Activated CD4-positive, alpha-beta memory T cell treated with anti-CD3 and anti-CD28 coated beads for 36 hours (primary cell): ENCODE measurements at regions of chr11 and their contacts with region 1.

Region 1: GRCh38 chr11:95835768-95836488 is 45.6 kb downstream of the CEP57 start:
- DNase-seq: peak; percentile 63
- H3K4me3 Mint-ChIP-seq: no peak overlapping the region
- H3K27ac Mint-ChIP-seq: no peak overlapping the region
- H3K4me1 Mint-ChIP-seq: peaks cover 3% of the 10 kb centered on the region
- H3K27me3 Mint-ChIP-seq: no peaks in the 10 kb centered on the region

Region 2: DNA sequence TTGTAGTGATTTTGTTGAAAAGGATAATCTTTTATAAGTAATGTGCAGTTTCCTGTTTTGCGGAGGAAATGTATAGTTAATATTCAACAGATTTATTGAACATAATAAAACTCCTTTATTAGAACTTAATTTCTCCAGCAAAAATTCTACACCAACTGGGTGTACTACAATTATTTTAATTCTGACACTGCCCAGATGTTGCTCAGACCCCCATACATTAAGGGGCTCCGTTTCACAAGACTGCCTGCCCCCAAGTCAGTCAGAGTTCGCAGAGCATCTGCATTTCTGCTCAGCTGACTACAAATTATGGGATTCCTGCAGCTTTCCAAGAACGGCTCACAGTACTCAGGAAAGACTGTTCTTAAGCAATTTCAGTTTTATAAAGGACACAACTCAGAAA is 39.4 kb before region 1 on chr11:
- CTCF ChIA-PET with region 1: interaction called, 14 read pairs
- POLR2A ChIA-PET with region 1: interaction called, 3 read pairs
- intact Hi-C with region 1: no loop called
- DNase-seq: no peak
- H3K4me3 Mint-ChIP-seq: no peak overlapping the region
- H3K27ac Mint-ChIP-seq: no peak overlapping the region
- H3K4me1 Mint-ChIP-seq: peaks cover 37% of the 10 kb centered on the region
- H3K27me3 Mint-ChIP-seq: no peaks in the 10 kb centered on the region

Region 3: DNA sequence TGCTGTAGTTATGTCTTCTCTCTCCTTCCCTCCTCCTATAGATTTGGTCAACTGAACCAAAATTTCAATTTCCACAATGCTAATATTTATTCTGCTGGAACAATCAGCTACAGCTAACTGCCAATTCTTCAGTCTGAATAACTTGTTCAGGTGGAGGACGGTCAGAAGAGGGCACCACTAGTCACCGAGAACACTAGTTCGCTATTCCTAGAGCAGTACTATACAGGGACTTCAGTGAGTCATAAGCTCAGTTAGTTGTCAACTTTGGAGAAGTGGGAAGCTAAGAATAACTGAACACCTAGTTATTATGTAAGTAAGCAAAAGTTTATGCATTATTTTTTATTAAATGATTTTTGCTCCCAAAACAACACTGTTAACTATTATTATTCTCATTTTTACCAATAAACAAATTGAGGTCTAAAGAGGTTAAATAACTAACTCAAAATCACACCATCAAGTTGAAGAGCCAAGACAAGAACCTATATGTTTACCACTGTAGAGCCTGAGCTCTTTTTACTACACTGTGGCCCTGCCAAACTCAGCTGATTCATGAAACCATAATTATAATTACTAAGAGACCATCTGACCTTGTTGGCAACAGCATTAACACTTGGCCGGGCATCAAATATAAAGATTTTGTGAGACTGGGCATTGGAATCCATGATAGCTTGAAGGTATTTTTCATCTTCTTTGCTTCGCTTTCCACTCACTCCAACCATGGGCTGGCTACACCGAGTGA is 13.3 kb after region 1 on chr11:
- CTCF ChIA-PET with region 1: interaction called, 11 read pairs
- POLR2A ChIA-PET with region 1: no interaction called
- intact Hi-C with region 1: no loop called
- DNase-seq: peak; percentile 39
- H3K4me3 Mint-ChIP-seq: no peak overlapping the region
- H3K27ac Mint-ChIP-seq: no peak overlapping the region
- H3K4me1 Mint-ChIP-seq: no peaks in the 10 kb centered on the region
- H3K27me3 Mint-ChIP-seq: no peaks in the 10 kb centered on the region